Mucosa of descending colon (tissue), 3 donors: ENCODE measurements at regions of chr6 and their contacts with region 1.

Region 1: DNA sequence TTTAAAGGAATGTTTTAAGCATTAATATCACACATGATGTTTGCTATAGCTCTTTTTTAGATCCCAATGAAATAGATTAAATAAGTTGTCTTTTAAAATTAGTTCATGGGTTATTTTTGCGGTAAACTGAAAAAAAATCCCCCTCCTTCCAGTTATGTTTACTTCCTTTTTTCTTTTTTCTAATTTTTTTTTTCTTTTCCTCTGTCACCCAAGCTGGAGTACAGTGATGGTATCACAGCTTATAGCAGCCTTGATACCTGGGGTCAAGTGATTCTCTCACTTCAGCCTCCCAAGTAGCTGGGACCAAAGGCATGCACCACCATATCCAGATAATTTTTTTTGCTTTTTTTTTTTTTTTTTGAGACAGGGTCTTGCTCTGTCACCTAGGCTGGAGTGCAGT is 17.8 kb upstream of the SCAF8 start:
- DNase-seq: no peak
- ATAC-seq: no peak
- H3K4me3 ChIP-seq: no peak overlapping the region
- H3K4me1 ChIP-seq: peaks cover 4% of the 10 kb centered on the region
- CTCF ChIP-seq: no peak

Region 2: DNA sequence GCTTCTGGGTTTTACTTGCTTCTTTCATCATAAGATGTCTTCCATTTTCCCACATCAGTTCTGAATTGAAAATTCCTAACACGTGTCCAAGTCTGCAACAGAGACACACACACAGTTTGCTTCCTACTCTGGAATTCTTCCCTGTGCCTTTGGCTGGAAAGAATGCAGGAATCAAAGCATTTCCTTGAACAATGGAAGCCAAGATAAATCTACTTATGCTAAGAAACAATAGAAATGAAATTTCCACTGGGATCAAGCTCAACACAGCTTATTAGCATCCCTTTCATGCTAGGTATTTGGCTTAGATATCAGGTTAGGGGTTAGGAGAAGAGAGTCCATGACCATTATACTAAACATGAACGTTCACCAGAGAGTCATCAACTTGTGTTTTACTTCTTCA is 83.3 kb before region 1 on chr6:
- intact Hi-C with region 1: no loop called
- DNase-seq: no peak
- ATAC-seq: no peak
- H3K4me3 ChIP-seq: no peak overlapping the region
- H3K4me1 ChIP-seq: no peaks in the 10 kb centered on the region
- CTCF ChIP-seq: no peak

Region 3: DNA sequence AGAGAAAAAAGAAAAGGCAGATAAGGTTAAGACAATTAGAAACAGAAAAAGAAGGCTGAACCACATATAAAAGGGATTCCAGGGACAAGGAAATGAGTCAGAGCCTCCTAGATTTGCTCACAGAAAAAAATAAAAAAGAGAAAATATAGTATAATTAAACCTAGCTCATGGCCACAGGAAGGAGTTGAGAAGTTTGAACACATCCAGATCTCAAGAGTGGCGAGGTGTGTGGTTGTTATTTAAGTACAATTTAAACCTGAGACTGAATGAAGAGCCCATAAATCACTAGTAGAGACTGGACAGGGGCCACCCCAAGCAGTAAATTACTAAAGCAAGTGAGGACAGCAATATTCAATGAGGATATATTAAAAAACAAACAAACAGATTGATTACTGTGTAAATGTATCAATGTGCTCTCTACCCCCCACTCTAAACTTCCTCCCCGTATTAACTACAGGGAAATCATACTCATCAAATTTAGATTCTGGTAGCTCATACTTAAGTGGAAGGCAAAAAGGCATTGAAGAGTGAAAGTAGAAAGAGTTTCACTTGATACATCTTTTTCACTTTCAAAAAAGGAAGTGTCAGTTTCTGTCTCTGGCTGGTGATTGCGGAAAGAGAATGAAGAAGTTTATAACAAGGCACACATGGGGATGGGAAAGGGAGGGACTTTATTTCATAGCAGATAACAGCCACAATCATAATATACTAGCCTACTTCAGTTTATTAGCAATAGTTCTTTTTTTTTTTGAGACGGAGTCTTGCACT is 31.5 kb before region 1 on chr6:
- intact Hi-C with region 1: loop called in 1 of 2 experiments (anchors 5 kb)
- DNase-seq: peak in 1 of 3 donors; percentile 20
- ATAC-seq: peak; percentile 86
- H3K4me3 ChIP-seq: no peak overlapping the region
- H3K4me1 ChIP-seq: peaks cover 10% of the 10 kb centered on the region
- CTCF ChIP-seq: no peak

Region 4: DNA sequence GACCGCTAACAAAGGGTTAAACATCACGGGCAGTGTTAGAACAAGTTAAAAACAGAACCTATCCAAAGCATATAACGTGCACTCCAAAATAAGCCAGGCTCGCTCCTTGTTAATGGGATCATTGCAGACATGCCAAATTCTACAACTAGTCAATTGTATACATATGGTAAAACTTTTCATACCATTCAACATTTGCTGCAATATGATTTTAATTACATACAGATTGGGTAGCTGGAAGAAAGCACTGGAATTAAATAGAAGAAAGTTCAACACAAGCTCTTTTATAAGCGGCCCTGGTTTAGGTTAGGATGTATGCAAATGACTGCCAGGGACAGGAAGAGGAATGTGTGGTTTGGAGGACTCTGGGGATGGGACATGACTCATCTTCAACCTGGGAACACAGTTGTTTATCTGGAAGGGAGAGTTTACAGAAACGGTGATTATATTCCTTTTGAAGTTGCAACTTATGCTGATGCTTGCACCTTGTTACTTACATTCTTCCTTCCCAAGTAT is 217.1 kb after region 1 on chr6:
- intact Hi-C with region 1: no loop called
- DNase-seq: no peak
- ATAC-seq: no peak
- H3K4me3 ChIP-seq: no peak overlapping the region
- H3K4me1 ChIP-seq: no peaks in the 10 kb centered on the region
- CTCF ChIP-seq: no peak